A673 (cell line): ENCODE measurements at regions of chr20 and their contacts with region 1.

Region 1: DNA sequence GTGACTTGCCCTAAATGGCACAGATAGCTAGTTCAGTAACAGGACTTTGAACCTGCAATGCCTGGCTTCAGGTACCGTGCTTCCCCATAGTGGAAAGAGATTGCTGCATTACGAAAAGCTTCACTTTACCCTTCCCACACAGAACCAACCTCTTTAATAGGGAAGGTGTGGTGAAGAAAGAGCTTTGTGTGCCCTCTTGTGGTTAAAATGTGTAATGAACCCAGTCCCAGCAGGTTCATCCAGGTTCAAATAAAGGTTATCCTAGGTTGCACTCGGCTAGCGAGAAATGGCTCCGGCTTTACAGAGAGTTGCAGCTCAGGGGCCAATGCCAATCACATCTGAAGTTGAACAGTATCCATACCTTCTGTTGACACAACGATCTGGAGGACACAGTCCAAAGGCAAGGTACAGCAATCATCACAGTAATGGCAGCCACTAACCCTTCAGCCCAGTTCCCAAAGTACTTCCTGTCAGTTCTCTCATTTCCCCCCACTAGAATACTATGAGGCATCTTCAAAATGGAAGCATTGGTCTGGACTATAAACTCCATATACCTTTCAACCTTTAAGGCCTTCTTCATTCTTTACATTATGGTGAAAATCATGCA is 3.0 kb downstream of the DEFB115 start:
- DNase-seq: peak; percentile 43
- H3K4me3 ChIP-seq: no peak overlapping the region
- H3K27ac ChIP-seq: no peak overlapping the region
- H3K4me1 ChIP-seq: no peaks in the 10 kb centered on the region
- H3K27me3 ChIP-seq: no peaks in the 10 kb centered on the region
- CTCF ChIP-seq: peak; percentile 72

Region 2: DNA sequence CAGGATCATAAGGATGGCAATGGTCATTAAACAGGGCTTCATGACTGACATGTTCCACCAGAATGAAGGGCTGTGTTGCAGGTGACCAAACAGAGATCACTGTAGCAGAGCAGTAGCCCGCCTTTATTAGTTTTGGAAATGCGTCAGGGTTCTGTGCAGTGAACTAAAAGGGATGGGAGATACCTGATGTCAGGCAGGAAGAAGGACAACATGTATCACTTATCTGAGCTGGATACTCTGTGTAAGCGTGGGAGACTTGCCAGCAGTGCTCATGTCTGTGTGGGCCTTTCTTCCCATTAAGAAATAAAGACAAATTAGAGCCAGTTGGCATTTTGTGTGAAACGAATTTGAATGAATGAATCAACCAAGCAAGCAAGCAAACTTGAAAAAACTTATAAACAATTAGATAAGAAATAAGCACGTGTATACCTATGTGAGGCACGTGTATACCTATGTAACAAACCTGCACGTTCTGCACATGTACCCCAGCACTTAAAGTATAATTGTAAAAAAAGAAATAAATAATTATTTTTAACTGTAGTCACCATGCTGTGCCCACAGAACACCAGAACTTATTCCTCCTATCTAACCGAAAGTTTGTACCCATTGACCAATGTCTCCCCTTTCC is 48.2 kb after region 1 on chr20 and contains the start of gene DEFB116:
- CTCF ChIA-PET with region 1: no interaction called
- POLR2A ChIA-PET with region 1: no interaction called
- intact Hi-C with region 1: loop called (anchors 5 kb)
- DNase-seq: no peak
- H3K4me3 ChIP-seq: no peak within 1 kb of the TSS
- H3K27ac ChIP-seq: no peak within 1 kb of the TSS
- H3K4me1 ChIP-seq: no peaks in the 10 kb centered on the region
- H3K27me3 ChIP-seq: no peaks in the 10 kb centered on the region
- CTCF ChIP-seq: no peak
- total RNA-seq, gene DEFB116: not detected in 2 replicates